H1 (cell line): ENCODE measurements at regions of chr22 and their contacts with region 1.

Region 1: DNA sequence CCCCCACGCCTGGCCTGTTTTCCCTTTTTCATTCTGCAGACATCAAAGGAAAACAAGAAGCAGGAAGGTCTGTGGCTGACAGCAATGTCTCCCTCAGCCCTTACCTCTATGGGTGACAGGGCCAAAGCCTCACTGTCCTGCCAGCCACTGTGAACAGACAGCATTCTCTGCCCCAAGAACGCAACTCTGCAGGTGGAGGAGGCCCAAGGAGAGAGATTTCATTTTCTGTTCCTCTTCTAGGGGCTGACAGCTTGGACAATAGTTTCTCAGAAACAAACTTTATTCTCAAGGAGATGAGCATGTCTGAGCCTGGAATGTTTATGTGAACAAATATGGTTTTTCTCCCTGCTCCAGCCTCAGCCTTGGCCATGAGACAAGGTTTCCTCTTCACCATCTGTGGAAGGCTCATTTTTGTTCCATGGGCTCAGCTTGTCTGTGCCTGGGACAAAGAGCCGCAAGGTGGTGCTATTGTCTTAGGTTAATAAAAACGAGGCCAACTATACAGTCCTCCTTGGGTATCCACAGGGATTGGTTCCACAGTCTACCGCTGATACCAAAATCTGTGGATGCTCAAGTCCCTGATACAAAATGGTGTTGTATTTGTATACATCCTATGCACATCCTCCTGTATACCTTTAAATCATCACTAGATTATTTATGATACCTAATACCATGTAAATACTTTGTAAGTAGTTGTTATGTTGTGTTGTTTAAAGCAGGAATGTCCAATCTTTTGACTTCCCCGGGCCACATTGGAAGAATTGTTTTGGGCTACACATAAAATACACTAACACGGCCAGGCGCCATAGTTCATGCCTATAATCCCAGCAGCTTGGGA is 5.8 kb downstream of the PIWIL3 start:
- DNase-seq: peak in 1 of 2 experiments; percentile 76
- H3K4me3 ChIP-seq: no peak overlapping the region
- H3K27ac ChIP-seq: no peak overlapping the region
- H3K4me1 ChIP-seq: peaks cover 0 to 3% (median 1%) of the 10 kb centered on the region in 4 experiments; a peak in 2 of 7 replicates
- H3K27me3 ChIP-seq: no peaks in the 10 kb centered on the region
- CTCF ChIP-seq: peak; percentile 47 to 82 (median 65)
- EP300 ChIP-seq: no peak
- POLR2A ChIP-seq: no peak
- RAD21 ChIP-seq: peak; percentile 82 to 85

Region 2: DNA sequence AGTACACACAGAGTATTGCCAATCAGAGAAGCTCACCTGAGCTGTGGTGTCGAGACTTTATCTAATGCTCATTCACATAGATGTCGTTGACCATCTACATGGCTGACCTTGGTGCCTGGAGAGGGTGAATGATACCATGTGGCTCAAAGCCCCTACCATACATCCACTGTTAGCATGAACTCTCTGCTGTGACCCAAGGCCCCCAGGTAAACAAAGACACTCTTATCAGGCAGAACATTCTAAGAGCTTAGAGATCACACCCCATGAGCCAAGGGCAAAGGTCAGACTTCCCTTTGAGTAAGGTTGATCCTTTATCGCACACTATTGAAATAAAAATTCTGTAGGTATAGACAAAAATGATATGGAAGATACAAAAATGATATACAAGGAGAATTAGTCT is 20.8 kb after region 1 on chr22:
- CTCF ChIA-PET with region 1: interaction called, 10 read pairs
- POLR2A ChIA-PET with region 1: no interaction called
- DNase-seq: no peak
- H3K4me3 ChIP-seq: no peak overlapping the region
- H3K27ac ChIP-seq: no peak overlapping the region
- H3K4me1 ChIP-seq: no peaks in the 10 kb centered on the region
- H3K27me3 ChIP-seq: no peaks in the 10 kb centered on the region
- CTCF ChIP-seq: no peak
- EP300 ChIP-seq: no peak
- POLR2A ChIP-seq: no peak
- RAD21 ChIP-seq: no peak

Region 3: DNA sequence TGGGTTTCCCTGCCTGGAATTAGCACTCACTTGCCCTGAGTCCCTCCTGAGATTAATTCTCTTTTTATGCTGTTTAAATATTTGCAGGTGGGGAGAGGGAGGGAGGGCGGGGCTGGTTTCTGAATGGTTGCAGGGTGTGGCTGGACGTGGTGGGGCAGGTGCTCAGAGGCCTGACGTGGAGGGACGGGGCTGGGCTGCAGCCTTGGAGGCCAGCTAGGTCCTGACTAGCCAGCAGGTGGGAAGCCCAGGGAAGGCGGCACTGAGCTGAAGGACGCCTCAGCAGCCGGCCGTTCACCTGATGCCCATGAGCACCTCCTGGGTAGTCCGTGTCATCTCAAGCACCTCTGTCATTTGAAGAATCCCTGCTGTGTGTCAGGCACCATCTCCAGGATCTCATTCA is 58.5 kb after region 1 on chr22:
- CTCF ChIA-PET with region 1: interaction called, 10 read pairs
- POLR2A ChIA-PET with region 1: no interaction called
- DNase-seq: no peak
- H3K4me3 ChIP-seq: no peak overlapping the region
- H3K27ac ChIP-seq: no peak overlapping the region
- H3K4me1 ChIP-seq: peaks cover 4 to 12% (median 11%) of the 10 kb centered on the region in 4 experiments
- H3K27me3 ChIP-seq: no peaks in the 10 kb centered on the region
- CTCF ChIP-seq: no peak
- EP300 ChIP-seq: no peak
- POLR2A ChIP-seq: no peak
- RAD21 ChIP-seq: no peak

Region 4: GRCh38 chr22:24985826-24986214 is 217.1 kb after region 1 on chr22:
- CTCF ChIA-PET with region 1: no interaction called
- POLR2A ChIA-PET with region 1: no interaction called
- DNase-seq: no peak
- H3K4me3 ChIP-seq: no peak overlapping the region
- H3K27ac ChIP-seq: no peak overlapping the region
- H3K4me1 ChIP-seq: peaks cover 0 to 4% (median 1%) of the 10 kb centered on the region in 4 experiments; a peak in 4 of 7 replicates
- H3K27me3 ChIP-seq: no peaks in the 10 kb centered on the region
- CTCF ChIP-seq: no peak
- EP300 ChIP-seq: no peak
- POLR2A ChIP-seq: no peak
- RAD21 ChIP-seq: no peak